Activated B cell treated with CpG ODN at 0.5 μM for 24 hours (primary cell): ENCODE measurements at regions of chr14 and their contacts with region 1.

Region 1: DNA sequence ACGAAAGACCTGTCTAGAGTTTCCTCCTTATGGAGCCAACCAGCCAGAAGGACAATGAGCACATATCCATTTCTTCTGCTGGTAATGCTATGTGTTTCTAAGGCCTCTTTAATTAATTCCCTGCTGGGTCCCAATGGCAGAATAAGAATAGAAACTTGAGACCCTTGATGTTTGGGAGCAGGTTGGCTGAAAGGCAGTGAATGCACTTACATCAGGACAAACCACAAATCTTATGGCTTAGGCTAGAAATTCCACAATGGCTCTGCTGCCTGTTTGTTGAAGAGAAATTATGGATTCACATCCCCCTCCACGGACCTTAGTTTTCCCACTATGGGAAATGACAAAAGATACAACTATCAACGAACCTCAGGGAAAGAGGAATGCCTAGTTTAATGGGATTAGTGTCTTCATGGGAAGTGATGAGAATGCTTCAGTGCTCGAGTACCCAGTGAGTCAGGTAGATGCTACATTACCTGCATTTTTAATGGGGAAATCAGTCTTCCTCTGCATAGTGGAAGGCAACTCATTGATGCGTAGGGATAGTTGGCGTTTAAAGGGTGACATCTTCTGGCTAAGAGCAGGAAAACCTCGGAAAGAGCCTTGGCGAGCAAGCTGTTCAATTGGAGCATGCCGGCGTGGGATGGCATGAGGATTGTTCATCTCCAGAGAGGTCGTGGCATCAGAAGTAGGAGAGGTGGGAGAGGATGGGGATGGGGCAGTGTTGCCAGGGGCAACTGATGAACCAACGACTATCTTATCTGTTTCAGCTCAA is 46.5 kb downstream of the PAPLN start:
- DNase-seq: no peak
- ATAC-seq: no peak
- H3K4me3 Mint-ChIP-seq: no peak overlapping the region
- H3K27ac Mint-ChIP-seq: no peak overlapping the region
- H3K4me1 Mint-ChIP-seq: no peaks in the 10 kb centered on the region
- H3K27me3 Mint-ChIP-seq: no peaks in the 10 kb centered on the region
- CTCF ChIP-seq: no peak

Region 2: GRCh38 chr14:73239393-73240241 is 44.2 kb before region 1 on chr14:
- CTCF ChIA-PET with region 1: no interaction called
- POLR2A ChIA-PET with region 1: no interaction called
- intact Hi-C with region 1: loop called (anchors 5 kb)
- DNase-seq: peak; percentile 14
- ATAC-seq: no peak
- H3K4me3 Mint-ChIP-seq: peak overlapping the region; percentile 63
- H3K27ac Mint-ChIP-seq: no peak overlapping the region
- H3K4me1 Mint-ChIP-seq: peaks cover 69% of the 10 kb centered on the region
- H3K27me3 Mint-ChIP-seq: peaks cover 46% of the 10 kb centered on the region
- CTCF ChIP-seq: no peak

Region 3: DNA sequence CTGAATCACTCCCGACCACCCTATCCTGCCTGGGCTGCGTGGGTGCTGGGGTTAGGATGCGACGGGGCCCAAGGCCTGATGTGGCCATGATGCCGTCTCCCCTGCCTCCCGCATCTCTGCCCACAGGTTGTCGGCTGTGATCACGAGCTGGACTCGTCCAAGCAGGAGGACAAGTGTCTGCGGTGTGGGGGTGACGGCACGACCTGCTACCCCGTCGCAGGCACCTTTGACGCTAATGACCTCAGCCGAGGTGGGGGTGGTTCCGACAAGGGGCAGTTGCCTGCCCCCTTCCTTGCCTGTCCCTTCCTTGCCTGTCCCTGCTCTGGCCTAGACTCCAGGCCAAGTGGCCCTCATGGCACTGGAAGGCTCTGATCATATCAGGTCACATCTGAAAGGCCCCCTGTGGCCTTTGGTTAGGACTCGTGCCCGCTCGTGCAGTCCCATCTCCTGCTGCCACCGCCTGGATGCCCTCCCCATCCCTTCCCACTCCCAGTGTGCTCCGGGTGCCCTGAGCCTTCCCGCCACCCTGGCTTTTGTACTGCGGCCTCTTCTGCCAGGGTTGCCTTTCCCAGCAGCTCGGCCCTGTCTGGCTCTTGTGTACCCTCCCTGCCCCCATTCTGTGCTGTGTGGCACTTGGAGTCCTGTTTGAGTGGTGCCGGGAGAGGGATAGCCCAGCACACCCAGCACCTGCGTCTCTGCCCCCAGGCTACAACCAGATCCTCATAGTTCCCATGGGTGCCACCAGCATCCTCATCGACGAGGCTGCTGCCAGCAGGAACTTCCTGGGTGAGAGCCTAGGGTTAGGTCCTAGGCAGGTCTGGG is 32.8 kb before region 1 on chr14:
- CTCF ChIA-PET with region 1: no interaction called
- POLR2A ChIA-PET with region 1: no interaction called
- intact Hi-C with region 1: no loop called
- DNase-seq: no peak
- ATAC-seq: no peak
- H3K4me3 Mint-ChIP-seq: no peak overlapping the region
- H3K27ac Mint-ChIP-seq: no peak overlapping the region
- H3K4me1 Mint-ChIP-seq: peaks cover 32% of the 10 kb centered on the region
- H3K27me3 Mint-ChIP-seq: no peaks in the 10 kb centered on the region
- CTCF ChIP-seq: no peak

Region 4: GRCh38 chr14:73589116-73589515 is 305.3 kb after region 1 on chr14:
- CTCF ChIA-PET with region 1: no interaction called
- POLR2A ChIA-PET with region 1: no interaction called
- intact Hi-C with region 1: no loop called
- DNase-seq: no peak
- ATAC-seq: no peak
- H3K4me3 Mint-ChIP-seq: no peak overlapping the region
- H3K27ac Mint-ChIP-seq: no peak overlapping the region
- H3K4me1 Mint-ChIP-seq: peaks cover 6% of the 10 kb centered on the region
- H3K27me3 Mint-ChIP-seq: no peaks in the 10 kb centered on the region
- CTCF ChIP-seq: no peak